ENCODE measurements at regions of chr3 and their contacts with region 1.

Region 1: DNA sequence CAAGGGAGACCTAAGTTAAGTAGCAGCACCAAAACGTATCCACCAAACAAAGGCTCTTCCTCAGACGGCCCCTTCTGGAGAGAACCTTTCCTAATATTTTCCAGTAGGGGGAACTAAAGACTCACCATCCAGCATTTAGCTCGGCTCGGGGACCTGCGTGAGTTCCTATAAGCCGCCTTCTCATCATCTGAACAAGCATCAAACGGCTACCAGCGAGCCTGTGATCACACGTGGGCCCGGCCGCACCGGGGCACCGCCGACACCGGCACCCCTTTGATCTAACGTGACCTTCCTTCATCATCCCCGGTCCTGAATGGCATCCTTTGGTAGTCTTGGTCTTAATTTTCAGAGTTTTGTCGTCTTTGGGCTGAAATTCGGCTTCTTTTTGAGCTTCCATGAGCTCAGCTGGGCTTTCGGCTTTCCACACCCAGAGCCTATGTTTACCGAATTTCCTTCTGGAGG is 1.4 kb upstream of the ROBO2 start:
- DNase-seq: no peak
- ATAC-seq: no peak
- H3K4me3 ChIP-seq: no peak overlapping the region
- H3K4me3 Mint-ChIP-seq: no peak overlapping the region
- H3K27ac ChIP-seq: no peak overlapping the region
- H3K27ac Mint-ChIP-seq: no peak overlapping the region
- H3K4me1 ChIP-seq: no peaks in the 10 kb centered on the region
- H3K4me1 Mint-ChIP-seq: no peaks in the 10 kb centered on the region
- H3K27me3 ChIP-seq: peaks cover 10 to 39% of the 10 kb centered on the region in 2 experiments
- H3K27me3 Mint-ChIP-seq: peaks cover 52% of the 10 kb centered on the region
- CTCF ChIP-seq: no peak

Region 2: DNA sequence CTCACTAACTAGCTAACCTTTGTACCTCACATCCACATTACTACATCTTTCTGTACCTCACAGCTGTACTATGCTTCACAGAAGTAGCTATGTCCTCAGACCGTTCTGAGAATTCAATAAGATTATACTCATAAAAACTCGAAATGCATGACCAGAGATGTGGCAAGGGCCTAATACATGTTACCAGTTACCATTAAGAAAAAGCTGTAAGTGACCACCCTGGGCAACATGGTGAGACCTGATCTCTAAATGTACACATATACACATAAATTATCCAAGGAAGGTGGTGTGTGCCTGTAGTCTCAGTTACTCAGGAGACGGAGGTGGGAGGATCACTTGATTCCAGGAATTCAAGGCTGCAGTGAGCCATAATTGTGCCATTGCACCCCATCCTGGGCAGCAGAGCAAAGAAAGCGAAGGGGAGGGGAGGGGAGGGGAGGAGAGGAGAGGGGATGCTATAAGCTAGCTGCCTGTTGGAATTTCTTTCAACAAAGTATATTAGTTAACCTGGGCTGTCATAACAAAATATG is 770.6 kb before region 1 on chr3:
- CTCF ChIA-PET with region 1: no interaction called
- POLR2A ChIA-PET with region 1: no interaction called
- intact Hi-C with region 1: no loop called
- DNase-seq: no peak
- ATAC-seq: no peak
- H3K4me3 ChIP-seq: no peak overlapping the region
- H3K4me3 Mint-ChIP-seq: no peak overlapping the region
- H3K27ac ChIP-seq: no peak overlapping the region
- H3K27ac Mint-ChIP-seq: no peak overlapping the region
- H3K4me1 ChIP-seq: no peaks in the 10 kb centered on the region
- H3K4me1 Mint-ChIP-seq: no peaks in the 10 kb centered on the region
- H3K27me3 ChIP-seq: no peaks in the 10 kb centered on the region
- H3K27me3 Mint-ChIP-seq: no peaks in the 10 kb centered on the region
- CTCF ChIP-seq: no peak

Region 3: GRCh38 chr3:77026904-77027634 is 11.4 kb before region 1 on chr3:
- CTCF ChIA-PET with region 1: no interaction called
- POLR2A ChIA-PET with region 1: no interaction called
- intact Hi-C with region 1: loop called in 1 of 2 experiments (anchors 1 kb)
- DNase-seq: no peak
- ATAC-seq: no peak
- H3K4me3 ChIP-seq: no peak overlapping the region
- H3K4me3 Mint-ChIP-seq: no peak overlapping the region
- H3K27ac ChIP-seq: no peak overlapping the region
- H3K27ac Mint-ChIP-seq: no peak overlapping the region
- H3K4me1 ChIP-seq: no peaks in the 10 kb centered on the region
- H3K4me1 Mint-ChIP-seq: no peaks in the 10 kb centered on the region
- H3K27me3 ChIP-seq: no peaks in the 10 kb centered on the region
- H3K27me3 Mint-ChIP-seq: no peaks in the 10 kb centered on the region
- CTCF ChIP-seq: no peak